K562 (cell line): ENCODE measurements at regions of chr5 and their contacts with region 1.

Region 1: GRCh38 chr5:127746756-127747155 is 43.6 kb downstream of the CCDC192 start:
- DNase-seq: peak in 2 of 4 experiments; percentile 18 to 21
- ATAC-seq: peak; percentile 72
- H3K4me3 ChIP-seq: no peak overlapping the region
- H3K27ac ChIP-seq: no peak overlapping the region
- H3K4me1 ChIP-seq: no peaks in the 10 kb centered on the region
- H3K27me3 ChIP-seq: no peaks in the 10 kb centered on the region; a peak in 1 of 5 replicates
- CTCF ChIP-seq: peak; percentile 28 to 62 (median 31); a peak in 4 of 6 replicates
- EP300 ChIP-seq: no peak
- POLR2A ChIP-seq: no peak
- RAD21 ChIP-seq: peak; percentile 53 to 66

Region 2: DNA sequence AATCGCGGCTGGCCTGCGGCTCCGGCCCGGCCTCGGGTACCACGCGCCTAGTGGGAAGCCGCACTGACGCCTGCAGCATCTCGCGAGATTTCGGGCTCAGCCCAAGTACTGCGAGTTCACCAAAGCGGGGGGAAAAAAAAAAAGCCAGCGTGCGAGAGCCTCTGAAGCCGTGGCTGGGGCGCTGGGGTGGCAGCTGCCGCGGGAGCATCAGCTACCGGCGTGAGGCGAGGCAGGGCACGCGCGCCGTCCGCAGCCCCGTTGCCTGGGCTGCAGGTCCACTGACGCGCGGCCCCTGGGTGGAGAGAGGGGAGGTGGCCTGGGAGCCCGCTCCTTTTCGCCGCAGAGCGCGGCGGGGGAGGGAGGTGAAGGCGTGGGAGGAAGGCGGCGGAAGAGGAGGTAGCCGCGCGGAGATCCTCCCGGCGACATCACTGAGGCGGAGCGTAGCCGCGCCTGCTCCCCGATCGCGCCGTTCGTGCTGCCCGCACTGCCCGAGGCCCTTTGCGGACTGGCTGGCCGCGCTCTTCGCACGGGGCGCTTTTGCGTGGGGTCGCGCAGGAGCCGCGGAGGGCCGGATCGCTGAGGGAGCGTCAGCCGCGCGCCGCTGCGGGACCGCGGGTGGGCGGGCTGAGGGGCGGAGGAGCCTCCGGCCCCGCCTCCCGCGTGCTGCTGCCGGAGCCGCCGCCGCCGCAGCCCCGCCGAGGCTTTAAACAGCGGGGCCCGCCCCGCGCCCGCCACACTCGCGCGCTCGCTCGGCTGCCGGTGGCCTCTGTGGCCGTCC is 336.5 kb after region 1 on chr5 and contains the start of gene SLC12A2:
- CTCF ChIA-PET with region 1: no interaction called
- POLR2A ChIA-PET with region 1: no interaction called
- in situ Hi-C with region 1: no loop called
- intact Hi-C with region 1: loop called (anchors 10 kb)
- DNase-seq: peak; percentile 81 to 94 (median 85)
- ATAC-seq: peak; percentile 82
- H3K4me3 ChIP-seq: peak within 1 kb of the TSS; percentile 80
- H3K27ac ChIP-seq: peak within 1 kb of the TSS; percentile 89
- H3K4me1 ChIP-seq: peaks cover 17 to 20% of the 10 kb centered on the region in 2 experiments; a peak in 4 of 5 replicates
- H3K27me3 ChIP-seq: no peaks in the 10 kb centered on the region
- CTCF ChIP-seq: peak in 1 of 3 experiments; percentile 13; a peak in 1 of 6 replicates
- EP300 ChIP-seq: no peak
- POLR2A ChIP-seq: peak; percentile 84
- RAD21 ChIP-seq: no peak
- polyA plus RNA-seq, gene SLC12A2: 5.3 to 5.4 TPM

Region 3: DNA sequence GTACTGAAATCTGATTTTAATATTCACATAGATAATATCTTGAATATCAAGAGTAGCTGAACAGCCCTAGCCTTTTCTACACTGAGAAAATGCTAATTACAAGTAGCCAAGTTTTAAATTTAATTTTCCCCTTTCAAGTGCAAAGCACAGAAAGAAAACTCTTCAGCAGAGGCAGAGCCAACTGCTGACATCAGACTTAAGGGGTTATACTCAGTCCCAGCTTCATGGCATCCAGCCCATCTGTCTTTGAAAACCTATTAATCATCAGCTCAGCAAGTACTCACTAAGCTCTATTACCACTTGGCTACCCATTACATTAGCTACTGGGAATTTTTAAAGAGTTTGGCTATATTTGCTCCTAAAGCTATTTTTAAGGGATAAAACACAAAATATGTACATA is 557.3 kb after region 1 on chr5:
- CTCF ChIA-PET with region 1: no interaction called
- POLR2A ChIA-PET with region 1: no interaction called
- in situ Hi-C with region 1: no loop called
- intact Hi-C with region 1: no loop called
- DNase-seq: no peak
- ATAC-seq: no peak
- H3K4me3 ChIP-seq: no peak overlapping the region
- H3K27ac ChIP-seq: no peak overlapping the region
- H3K4me1 ChIP-seq: no peaks in the 10 kb centered on the region
- H3K27me3 ChIP-seq: no peaks in the 10 kb centered on the region
- CTCF ChIP-seq: no peak
- EP300 ChIP-seq: no peak
- POLR2A ChIP-seq: no peak
- RAD21 ChIP-seq: no peak

Region 4: DNA sequence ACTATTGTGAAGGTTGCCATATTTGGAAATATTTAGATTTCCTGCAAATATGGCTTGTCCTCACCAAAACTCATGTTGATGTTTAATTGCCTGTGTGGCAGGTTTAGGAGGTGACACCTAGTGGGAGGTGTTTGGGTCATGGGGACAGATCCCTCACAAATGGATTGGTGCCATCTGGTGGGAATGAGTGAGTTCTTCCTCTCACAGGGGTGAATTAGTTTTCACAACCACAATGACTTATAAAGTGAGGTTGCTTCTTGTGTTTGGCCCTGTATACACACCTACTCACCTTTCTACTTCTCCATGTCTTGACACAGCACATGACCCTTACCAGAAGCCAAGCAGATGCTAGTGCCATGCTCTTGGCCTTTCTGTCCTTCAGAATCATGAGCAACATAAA is 1388.9 kb after region 1 on chr5:
- CTCF ChIA-PET with region 1: no interaction called
- POLR2A ChIA-PET with region 1: no interaction called
- in situ Hi-C with region 1: no loop called
- intact Hi-C with region 1: loop called (anchors 10 kb)
- DNase-seq: peak in 2 of 4 experiments; percentile 16 to 53
- ATAC-seq: peak; percentile 94
- H3K4me3 ChIP-seq: no peak overlapping the region
- H3K27ac ChIP-seq: no peak overlapping the region
- H3K4me1 ChIP-seq: no peaks in the 10 kb centered on the region
- H3K27me3 ChIP-seq: no peaks in the 10 kb centered on the region
- CTCF ChIP-seq: peak; percentile 45 to 60 (median 52); a peak in 5 of 6 replicates
- EP300 ChIP-seq: no peak
- POLR2A ChIP-seq: no peak
- RAD21 ChIP-seq: peak; percentile 66 to 86